HEK293 (cell line): ENCODE measurements at regions of chr5 and their contacts with region 1.

Region 1: DNA sequence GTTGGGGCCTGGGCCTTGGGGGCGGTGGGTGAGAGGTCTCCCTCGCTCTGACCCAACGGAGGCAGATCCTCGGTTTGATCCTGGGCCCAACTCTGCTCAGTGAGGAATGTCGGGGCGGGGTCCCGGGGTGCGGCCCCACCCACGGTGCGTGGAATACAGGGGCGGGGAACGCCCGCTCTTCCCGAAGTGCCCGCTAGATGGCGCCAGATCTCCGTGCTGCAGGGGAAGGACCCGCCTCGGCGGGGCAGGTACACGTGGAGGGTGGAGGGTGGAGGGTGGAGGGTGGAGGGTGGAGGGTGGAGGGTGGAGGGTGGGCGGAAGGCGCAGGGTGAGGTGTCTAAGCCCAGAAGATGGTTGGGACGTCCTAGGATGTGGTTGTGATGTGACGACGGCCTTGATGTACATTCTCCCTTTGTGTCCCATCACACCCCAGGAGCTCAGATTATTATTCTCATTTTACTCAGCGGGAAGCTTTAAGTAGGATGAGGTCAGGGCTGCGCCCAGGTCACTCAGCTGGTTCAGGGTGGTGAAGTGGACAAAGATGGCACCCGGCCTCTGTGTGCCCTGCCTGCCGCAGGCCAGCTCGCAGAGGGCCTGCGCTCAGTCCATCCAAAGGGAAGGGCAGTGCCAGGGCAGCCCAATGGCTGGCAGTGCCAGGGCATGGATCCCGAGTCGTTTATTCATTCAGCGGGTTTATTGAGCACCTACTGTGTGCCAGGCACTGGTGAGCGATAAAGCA is 9.4 kb upstream of the RPS14 start:
- H3K4me3 ChIP-seq: no peak overlapping the region
- H3K27ac ChIP-seq: no peak overlapping the region
- H3K4me1 ChIP-seq: peaks cover 8% of the 10 kb centered on the region
- CTCF ChIP-seq: peak; percentile 75

Region 2: DNA sequence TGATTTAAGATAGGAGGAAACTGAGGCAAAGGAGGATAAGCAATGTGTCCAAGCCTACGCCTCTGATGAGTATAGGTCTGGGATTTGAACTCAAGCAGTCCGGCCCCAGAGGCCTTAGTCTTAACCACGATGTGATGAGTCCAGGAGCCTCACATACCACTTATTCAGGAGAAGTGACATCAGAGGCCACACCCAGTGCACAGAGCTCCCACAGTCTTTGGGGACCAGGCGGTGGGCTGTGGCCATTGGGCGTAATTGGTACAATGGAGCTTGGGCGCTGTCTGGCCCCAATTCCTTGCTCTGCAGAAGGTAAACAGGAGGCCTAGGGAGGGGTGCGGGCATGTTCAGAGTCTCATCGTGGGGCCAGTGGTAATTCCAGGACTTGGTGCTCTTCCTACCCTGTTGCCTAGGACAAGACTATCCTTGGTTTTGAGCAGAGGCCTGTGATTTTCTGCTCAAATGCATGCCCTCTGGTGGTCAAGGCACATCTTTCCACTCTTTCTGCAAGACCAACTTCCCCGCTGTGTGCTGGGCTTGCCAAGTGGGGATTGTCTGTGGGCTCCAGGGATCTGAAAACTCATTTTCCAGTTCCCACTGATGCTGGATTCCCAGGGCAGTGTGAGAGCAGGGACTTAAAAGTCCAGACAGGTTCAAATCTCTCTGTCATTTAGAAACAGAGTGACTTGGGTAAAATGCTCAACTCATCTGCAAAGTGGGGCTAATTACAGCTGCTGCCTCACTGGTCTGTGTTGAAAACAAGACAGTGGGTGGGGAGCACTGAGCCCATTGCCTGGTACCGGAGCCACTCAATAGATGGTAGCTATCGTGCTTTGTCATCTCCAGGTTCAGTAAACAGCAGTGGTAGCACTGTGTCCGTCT is 64.7 kb after region 1 on chr5:
- CTCF ChIA-PET with region 1: interaction called, 36 read pairs
- POLR2A ChIA-PET with region 1: no interaction called
- H3K4me3 ChIP-seq: no peak overlapping the region
- H3K27ac ChIP-seq: no peak overlapping the region
- H3K4me1 ChIP-seq: no peaks in the 10 kb centered on the region
- CTCF ChIP-seq: peak; percentile 66; the same call in 1 of the 2 replicates

Region 3: GRCh38 chr5:150544611-150545219 is 85.7 kb after region 1 on chr5:
- CTCF ChIA-PET with region 1: interaction called, 32 read pairs
- POLR2A ChIA-PET with region 1: no interaction called
- H3K4me3 ChIP-seq: no peak overlapping the region
- H3K27ac ChIP-seq: no peak overlapping the region
- H3K4me1 ChIP-seq: no peaks in the 10 kb centered on the region
- CTCF ChIP-seq: peak; percentile 94

Region 4: GRCh38 chr5:151097786-151098498 is 639.0 kb after region 1 on chr5:
- CTCF ChIA-PET with region 1: no interaction called
- POLR2A ChIA-PET with region 1: no interaction called
- H3K4me3 ChIP-seq: no peak overlapping the region
- H3K27ac ChIP-seq: no peak overlapping the region
- H3K4me1 ChIP-seq: no peaks in the 10 kb centered on the region
- CTCF ChIP-seq: no peak